ENCODE measurements at regions of chr5 and their contacts with region 1.

Region 1: DNA sequence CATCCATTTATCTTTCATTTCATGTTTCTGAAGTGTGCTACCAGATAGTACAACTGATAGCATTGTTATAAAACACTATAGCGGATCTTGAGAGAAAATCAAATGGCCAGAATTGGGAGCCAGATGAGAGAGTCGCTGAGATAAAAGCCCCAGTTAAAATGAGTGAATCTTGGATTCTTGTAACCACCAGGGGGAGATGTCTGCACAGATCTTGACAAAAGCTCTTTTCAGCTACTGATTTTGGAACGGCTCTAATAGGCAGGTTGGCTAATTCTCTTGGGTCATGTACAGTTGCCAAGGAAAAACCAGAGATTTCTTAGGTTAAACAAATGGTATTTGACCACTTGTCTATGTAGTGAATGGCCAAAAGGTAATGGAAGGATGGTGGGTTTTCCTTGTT is 21.7 kb downstream of the F2RL2 start:
- DNase-seq: peak; percentile 63 to 75
- ATAC-seq: peak; percentile 76 to 91; a peak in 5 of 6 replicates
- H3K4me3 ChIP-seq: no peak overlapping the region
- H3K27ac ChIP-seq: peak overlapping the region in 1 of 2 experiments; percentile 41; a peak in 2 of 6 replicates
- H3K4me1 ChIP-seq: peaks cover 11% of the 10 kb centered on the region
- CTCF ChIP-seq: peak; percentile 88
- EP300 ChIP-seq: no peak
- POLR2A ChIP-seq: no peak
- RAD21 ChIP-seq: peak; percentile 95 to 96

Region 2: DNA sequence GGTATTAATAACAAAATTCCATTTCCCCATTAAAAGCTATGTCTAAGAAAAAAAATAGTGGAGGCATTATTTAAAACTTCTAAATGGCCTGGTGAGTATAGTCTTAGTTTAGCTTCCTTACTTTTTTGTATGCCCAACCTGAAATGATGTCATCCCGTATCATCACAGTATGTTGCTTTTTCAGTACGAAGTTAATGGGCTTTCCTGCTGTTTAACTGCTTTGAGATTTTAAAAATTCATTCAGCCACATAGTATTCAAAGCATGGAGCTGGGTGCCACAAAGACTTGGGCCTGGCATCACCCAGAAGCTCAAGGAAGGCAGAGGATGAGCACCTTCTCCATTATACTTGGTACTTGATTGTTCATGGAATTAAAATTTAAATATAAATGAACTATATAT is 14.3 kb after region 1 on chr5:
- CTCF ChIA-PET with region 1: interaction called, 26 read pairs
- POLR2A ChIA-PET with region 1: no interaction called
- DNase-seq: no peak
- ATAC-seq: no peak
- H3K4me3 ChIP-seq: no peak overlapping the region
- H3K27ac ChIP-seq: no peak overlapping the region
- H3K4me1 ChIP-seq: peaks cover 15% of the 10 kb centered on the region; the same call in 2 of the 3 replicates
- CTCF ChIP-seq: no peak
- EP300 ChIP-seq: no peak
- POLR2A ChIP-seq: no peak
- RAD21 ChIP-seq: no peak

Region 3: GRCh38 chr5:76622076-76622475 is 20.6 kb after region 1 on chr5:
- CTCF ChIA-PET with region 1: interaction called, 10 read pairs
- POLR2A ChIA-PET with region 1: no interaction called
- DNase-seq: no peak
- ATAC-seq: no peak
- H3K4me3 ChIP-seq: peak overlapping the region; percentile 36; the same call in 2 of the 3 replicates
- H3K27ac ChIP-seq: peak overlapping the region; percentile 69 to 84; a peak in 5 of 6 replicates
- H3K4me1 ChIP-seq: peaks cover 23% of the 10 kb centered on the region; the same call in 2 of the 3 replicates
- CTCF ChIP-seq: no peak
- EP300 ChIP-seq: no peak
- POLR2A ChIP-seq: no peak
- RAD21 ChIP-seq: no peak

Region 4: GRCh38 chr5:76634661-76635060 is 33.2 kb after region 1 on chr5:
- CTCF ChIA-PET with region 1: interaction called, 42 read pairs
- POLR2A ChIA-PET with region 1: no interaction called
- DNase-seq: no peak
- ATAC-seq: no peak
- H3K4me3 ChIP-seq: no peak overlapping the region
- H3K27ac ChIP-seq: no peak overlapping the region
- H3K4me1 ChIP-seq: no peaks in the 10 kb centered on the region
- CTCF ChIP-seq: no peak
- EP300 ChIP-seq: no peak
- POLR2A ChIP-seq: no peak
- RAD21 ChIP-seq: no peak

Region 5: DNA sequence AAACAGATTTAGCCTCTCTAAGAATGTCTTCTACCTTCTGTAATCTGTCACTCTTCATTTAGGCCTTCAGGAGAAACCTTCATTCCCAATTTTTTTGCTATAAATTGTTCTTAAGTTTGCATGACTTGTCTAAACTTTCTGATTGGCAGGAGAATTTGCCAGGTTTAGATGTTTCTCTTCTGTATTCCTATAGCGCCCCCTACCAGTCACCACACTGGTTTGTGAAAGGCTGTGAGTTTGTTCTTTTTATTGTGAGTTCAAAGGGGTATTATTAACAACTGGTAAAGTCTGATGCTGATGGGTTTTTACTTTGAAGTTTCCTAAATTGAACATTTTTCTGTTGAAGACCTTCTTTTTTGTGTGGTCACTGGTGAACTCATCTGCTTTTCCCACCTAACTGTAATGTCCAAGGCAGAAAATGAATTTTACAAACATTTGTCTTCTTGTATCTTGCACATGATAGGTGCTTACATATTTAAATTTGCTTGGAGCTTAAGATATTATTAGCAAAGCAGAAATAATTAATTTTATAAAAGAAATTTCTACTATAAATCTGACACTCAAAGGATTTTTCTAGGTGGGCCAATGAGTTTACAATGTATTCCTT is 40.1 kb after region 1 on chr5:
- CTCF ChIA-PET with region 1: interaction called, 42 read pairs
- POLR2A ChIA-PET with region 1: no interaction called
- DNase-seq: peak; percentile 58 to 80
- ATAC-seq: peak; percentile 62 to 85; a peak in 5 of 6 replicates
- H3K4me3 ChIP-seq: no peak overlapping the region
- H3K27ac ChIP-seq: no peak overlapping the region
- H3K4me1 ChIP-seq: no peaks in the 10 kb centered on the region
- CTCF ChIP-seq: peak; percentile 86
- EP300 ChIP-seq: no peak
- POLR2A ChIP-seq: no peak
- RAD21 ChIP-seq: peak; percentile 87 to 93

Region 6: DNA sequence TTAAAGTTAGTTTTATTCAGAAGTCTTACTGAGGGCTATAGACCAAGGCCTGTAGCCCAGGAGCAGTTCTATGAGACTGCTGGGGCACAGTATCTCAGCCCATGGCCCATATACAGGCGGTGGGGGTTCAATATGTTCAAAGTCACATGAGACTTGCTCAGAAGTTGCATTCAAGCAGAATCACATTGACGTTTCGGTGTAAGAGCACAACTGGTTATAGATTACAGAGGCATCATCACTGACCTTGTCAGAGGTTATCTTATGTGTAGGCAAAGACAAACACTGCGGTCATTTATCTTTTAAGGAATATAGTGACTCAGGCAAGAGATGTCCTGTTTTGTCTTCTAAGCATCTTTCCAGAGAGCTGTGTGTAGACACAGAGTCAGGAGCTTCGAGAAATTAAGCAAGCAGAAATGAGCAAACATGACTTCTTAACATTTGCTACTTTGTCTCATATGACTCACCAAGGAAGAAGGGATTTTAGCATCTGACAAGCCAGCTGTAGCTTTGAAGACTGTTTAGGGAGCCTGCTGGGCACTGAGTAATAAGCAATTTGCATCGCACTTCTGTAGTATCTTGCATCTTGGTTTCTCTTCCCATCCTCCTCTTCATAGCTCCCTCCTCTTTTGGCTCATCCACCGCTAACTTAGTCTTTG is 204.5 kb after region 1 on chr5:
- CTCF ChIA-PET with region 1: interaction called, 10 read pairs
- POLR2A ChIA-PET with region 1: no interaction called
- DNase-seq: peak; percentile 90 to 98
- ATAC-seq: peak; percentile 83 to 89
- H3K4me3 ChIP-seq: peak overlapping the region; percentile 22; the same call in 1 of the 3 replicates
- H3K27ac ChIP-seq: peak overlapping the region; percentile 90 to 98
- H3K4me1 ChIP-seq: peaks cover 79% of the 10 kb centered on the region
- CTCF ChIP-seq: no peak
- EP300 ChIP-seq: peak; percentile 99
- POLR2A ChIP-seq: no peak
- RAD21 ChIP-seq: peak; percentile 13 to 72; a peak in 4 of 5 replicates

Region 7: GRCh38 chr5:77015938-77016569 is 414.6 kb after region 1 on chr5:
- CTCF ChIA-PET with region 1: interaction called, 22 read pairs
- POLR2A ChIA-PET with region 1: no interaction called
- DNase-seq: peak in 1 of 2 experiments; percentile 78
- ATAC-seq: peak; percentile 76 to 85; a peak in 5 of 6 replicates
- H3K4me3 ChIP-seq: no peak overlapping the region
- H3K27ac ChIP-seq: 0 out of 6 replicates have a peak overlapping the region, but pooled peaks of 1 of the 2 experiments have one; percentile 11
- H3K4me1 ChIP-seq: no peaks in the 10 kb centered on the region
- CTCF ChIP-seq: peak; percentile 64
- EP300 ChIP-seq: no peak
- POLR2A ChIP-seq: no peak
- RAD21 ChIP-seq: peak; percentile 79 to 85